RWPE1 (cell line): ENCODE measurements at regions of chr19 and their contacts with region 1.

Region 1: DNA sequence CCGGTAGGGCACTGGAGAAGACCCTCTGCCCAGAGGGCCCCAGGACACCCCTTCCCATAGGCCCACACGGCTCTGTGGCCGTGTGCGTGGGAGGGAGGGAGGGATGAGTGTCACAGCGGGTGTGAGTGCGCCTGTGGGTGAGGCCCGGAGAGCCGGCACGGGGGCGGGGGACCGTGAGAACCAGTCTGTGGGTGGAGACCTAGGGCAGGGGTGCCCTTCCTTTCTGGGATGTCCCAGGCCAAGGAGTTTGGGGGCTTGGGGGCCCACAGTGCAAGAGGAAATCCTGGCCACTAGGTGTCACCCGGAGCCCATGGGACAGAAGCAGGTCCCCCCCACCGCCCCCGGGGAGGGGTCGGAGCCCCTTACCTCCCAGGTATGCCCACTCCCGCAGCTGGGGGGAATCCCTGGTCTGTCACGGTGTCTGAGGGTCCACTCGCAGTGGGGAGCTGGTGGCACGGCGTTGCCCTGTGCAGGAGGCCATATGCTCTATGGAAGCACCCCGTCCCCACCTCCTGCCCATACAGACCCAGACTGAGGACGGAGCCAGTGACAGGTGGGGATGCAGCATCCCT is 16.0 kb upstream of the SLC7A10 start:
- DNase-seq: peak; percentile 24
- H3K27ac ChIP-seq: no peak overlapping the region
- CTCF ChIP-seq: peak; percentile 82

Region 2: GRCh38 chr19:32642771-32643170 is 598.8 kb before region 1 on chr19:
- CTCF ChIA-PET with region 1: no interaction called
- POLR2A ChIA-PET with region 1: no interaction called
- DNase-seq: no peak
- H3K27ac ChIP-seq: no peak overlapping the region
- CTCF ChIP-seq: no peak

Region 3: GRCh38 chr19:33394006-33394849 is 152.6 kb after region 1 on chr19:
- CTCF ChIA-PET with region 1: interaction called, 11 read pairs
- POLR2A ChIA-PET with region 1: no interaction called
- DNase-seq: peak; percentile 66
- H3K27ac ChIP-seq: peak overlapping the region; percentile 86
- CTCF ChIP-seq: no peak

Region 4: GRCh38 chr19:33406521-33407139 is 165.0 kb after region 1 on chr19:
- CTCF ChIA-PET with region 1: interaction called, 50 read pairs
- POLR2A ChIA-PET with region 1: interaction called, 3 read pairs
- DNase-seq: peak; percentile 66
- H3K27ac ChIP-seq: no peak overlapping the region
- CTCF ChIP-seq: peak; percentile 89